ENCODE measurements at regions of chr2 and their contacts with region 1.

Region 1: DNA sequence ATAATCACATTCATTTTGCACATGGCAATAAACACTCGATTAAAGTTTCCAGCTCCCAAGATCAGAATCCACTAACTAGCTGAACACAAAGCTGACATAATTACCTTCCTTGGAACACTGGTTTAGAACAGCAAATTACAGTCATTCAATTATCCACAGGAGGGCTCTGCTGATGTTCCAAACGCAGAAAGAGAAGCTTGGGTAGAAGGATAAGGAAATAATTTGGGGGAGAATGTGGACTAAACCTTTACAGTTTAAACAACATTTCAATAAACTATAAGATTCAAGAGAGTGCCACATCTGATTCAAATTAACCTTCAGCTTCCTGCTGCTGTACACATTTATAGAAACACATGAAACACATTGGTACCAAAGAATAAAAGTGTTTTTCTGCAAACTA is 67.8 kb upstream of the ARL4C start:
- DNase-seq: no peak
- ATAC-seq: no peak
- H3K4me3 ChIP-seq: no peak overlapping the region
- H3K27ac ChIP-seq: no peak overlapping the region
- H3K4me1 ChIP-seq: no peaks in the 10 kb centered on the region
- H3K27me3 ChIP-seq: no peaks in the 10 kb centered on the region
- CTCF ChIP-seq: peak in 2 of 3 experiments; percentile 11 to 40; a peak in 1 of 6 replicates
- POLR2A ChIP-seq: no peak
- RAD21 ChIP-seq: peak; percentile 73

Region 2: GRCh38 chr2:234840336-234840735 is 275.6 kb after region 1 on chr2:
- CTCF ChIA-PET with region 1: no interaction called
- POLR2A ChIA-PET with region 1: no interaction called
- RAD21 ChIA-PET with region 1: no interaction called
- intact Hi-C with region 1: no loop called
- DNase-seq: peak; percentile 71
- ATAC-seq: peak; percentile 92
- H3K4me3 ChIP-seq: 0 out of 4 replicates have a peak overlapping the region, but pooled peaks of 1 of the 2 experiments have one; percentile 14
- H3K27ac ChIP-seq: peak overlapping the region; percentile 19; the same call in 1 of the 2 replicates
- H3K4me1 ChIP-seq: peaks cover 26 to 42% of the 10 kb centered on the region in 2 experiments
- H3K27me3 ChIP-seq: no peaks in the 10 kb centered on the region
- CTCF ChIP-seq: no peak
- POLR2A ChIP-seq: no peak
- RAD21 ChIP-seq: peak; percentile 32; the same call in 1 of the 2 replicates

Region 3: DNA sequence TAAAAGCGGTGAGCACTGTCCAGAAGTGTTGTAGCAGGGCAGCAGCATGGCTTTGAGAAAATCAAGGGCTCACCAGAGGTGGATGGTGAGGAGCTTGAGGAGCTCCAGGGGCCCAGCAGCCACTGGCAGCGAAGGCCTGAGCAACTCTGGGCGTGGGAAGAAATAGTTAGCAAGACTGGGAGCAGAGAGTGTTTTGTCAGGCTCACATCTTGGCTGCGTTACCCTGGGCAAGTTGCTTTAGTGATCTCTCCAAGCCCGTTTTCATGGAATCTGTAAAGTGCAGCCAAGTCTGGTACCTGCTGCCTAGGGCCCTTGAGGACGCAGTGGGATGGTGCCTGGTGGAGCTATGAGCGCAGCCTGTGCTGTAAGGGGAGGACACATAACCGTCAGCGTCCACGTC is 465.4 kb after region 1 on chr2:
- CTCF ChIA-PET with region 1: no interaction called
- POLR2A ChIA-PET with region 1: interaction called, 14 read pairs
- RAD21 ChIA-PET with region 1: no interaction called
- intact Hi-C with region 1: no loop called
- DNase-seq: no peak
- ATAC-seq: no peak
- H3K4me3 ChIP-seq: no peak overlapping the region
- H3K27ac ChIP-seq: no peak overlapping the region
- H3K4me1 ChIP-seq: peaks cover 28 to 35% of the 10 kb centered on the region in 2 experiments
- H3K27me3 ChIP-seq: no peaks in the 10 kb centered on the region
- CTCF ChIP-seq: no peak
- POLR2A ChIP-seq: no peak
- RAD21 ChIP-seq: no peak

Measured in HCT116 (cell line).